ENCODE measurements at regions of chr2 and their contacts with region 1.

Region 1: DNA sequence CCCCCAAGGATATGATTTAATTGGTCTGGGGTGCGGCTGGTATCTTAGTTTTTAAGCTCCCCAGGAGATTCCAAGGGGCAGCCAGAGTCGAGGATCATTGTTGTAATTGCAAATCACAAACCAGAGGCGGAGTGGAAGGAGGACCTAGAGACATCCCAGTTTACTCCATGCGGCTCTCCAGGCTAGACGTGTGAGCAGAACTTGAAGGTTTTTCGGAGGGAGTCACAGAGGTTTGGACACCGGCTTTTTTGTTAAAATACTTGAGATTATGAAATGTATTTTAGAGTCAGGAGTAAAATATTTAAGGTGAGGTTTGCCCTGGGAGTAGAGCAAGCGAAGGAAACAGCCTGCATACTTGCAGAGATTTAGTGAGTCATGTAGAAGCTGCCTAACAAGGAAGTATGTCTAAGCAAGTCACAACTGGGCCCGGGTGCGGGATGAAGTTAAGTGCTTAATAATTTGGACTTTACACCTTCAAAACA is 39.5 kb downstream of the TGOLN2 start:
- DNase-seq: peak; percentile 50
- H3K4me3 ChIP-seq: no peak overlapping the region
- CTCF ChIP-seq: no peak

Region 2: DNA sequence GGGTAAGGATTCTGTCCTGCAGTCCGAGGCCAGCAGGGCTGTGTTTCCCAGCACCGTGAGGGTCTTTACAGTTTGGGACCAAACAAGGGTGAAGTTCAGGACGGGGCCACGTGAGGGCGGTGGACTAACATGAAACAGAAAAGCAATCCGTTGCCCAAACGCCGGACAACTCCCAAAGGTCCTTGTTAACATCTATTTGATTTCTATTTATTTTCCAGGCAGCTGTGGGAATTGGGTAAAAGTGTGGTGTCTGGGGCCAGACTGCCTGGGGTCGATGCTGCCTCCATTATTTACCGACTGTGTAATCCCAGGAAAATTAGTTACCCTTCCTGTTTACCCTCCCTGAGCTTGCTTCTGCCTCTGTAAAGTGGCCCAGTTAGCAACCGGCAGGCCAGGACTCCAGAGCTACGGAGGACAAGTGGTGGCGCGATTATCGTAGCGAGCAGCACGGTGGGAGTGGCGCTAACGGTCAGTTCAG is 221.4 kb before region 1 on chr2:
- CTCF ChIA-PET with region 1: interaction called, 188 read pairs
- POLR2A ChIA-PET with region 1: no interaction called
- DNase-seq: no peak
- H3K4me3 ChIP-seq: no peak overlapping the region
- CTCF ChIP-seq: peak; percentile 81

Region 3: DNA sequence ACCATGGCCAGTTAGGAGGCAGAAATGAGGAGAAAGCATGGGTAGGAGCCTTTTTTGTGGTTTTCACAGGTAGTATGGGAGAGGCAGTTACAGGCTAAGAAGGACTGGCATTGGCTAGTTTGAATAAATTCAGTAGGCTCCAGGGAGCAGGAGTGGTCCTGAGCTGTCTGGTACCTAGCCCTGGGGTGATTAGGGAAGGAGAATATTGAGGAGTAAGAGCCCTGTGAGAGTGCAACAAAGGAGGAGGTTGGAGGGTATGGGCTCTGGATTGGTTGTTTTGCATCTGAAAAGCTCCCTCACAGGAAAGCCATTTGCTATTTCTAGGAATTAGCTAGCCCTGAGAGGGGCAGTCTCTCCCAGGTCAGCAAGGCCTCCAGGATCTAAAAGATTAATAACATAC is 168.4 kb before region 1 on chr2:
- CTCF ChIA-PET with region 1: interaction called, 12 read pairs
- POLR2A ChIA-PET with region 1: no interaction called
- DNase-seq: no peak
- H3K4me3 ChIP-seq: no peak overlapping the region
- CTCF ChIP-seq: no peak

Region 4: GRCh38 chr2:85151026-85151425 is 137.3 kb before region 1 on chr2:
- CTCF ChIA-PET with region 1: interaction called, 11 read pairs
- POLR2A ChIA-PET with region 1: no interaction called
- DNase-seq: no peak
- H3K4me3 ChIP-seq: no peak overlapping the region
- CTCF ChIP-seq: no peak

Region 5: GRCh38 chr2:85273738-85274731 is 14.2 kb before region 1 on chr2:
- CTCF ChIA-PET with region 1: interaction called, 14 read pairs
- POLR2A ChIA-PET with region 1: no interaction called
- DNase-seq: no peak
- H3K4me3 ChIP-seq: no peak overlapping the region
- CTCF ChIP-seq: no peak

Measured in AG04449 (cell line).